AG04450 (cell line): ENCODE measurements at regions of chr2 and their contacts with region 1.

Region 1: GRCh38 chr2:212892193-212892592 is 259.2 kb downstream of the IKZF2 start:
- DNase-seq: peak; percentile 16
- H3K4me3 ChIP-seq: no peak overlapping the region
- H3K27ac ChIP-seq: no peak overlapping the region
- H3K27me3 ChIP-seq: no peaks in the 10 kb centered on the region
- CTCF ChIP-seq: peak; percentile 64

Region 2: DNA sequence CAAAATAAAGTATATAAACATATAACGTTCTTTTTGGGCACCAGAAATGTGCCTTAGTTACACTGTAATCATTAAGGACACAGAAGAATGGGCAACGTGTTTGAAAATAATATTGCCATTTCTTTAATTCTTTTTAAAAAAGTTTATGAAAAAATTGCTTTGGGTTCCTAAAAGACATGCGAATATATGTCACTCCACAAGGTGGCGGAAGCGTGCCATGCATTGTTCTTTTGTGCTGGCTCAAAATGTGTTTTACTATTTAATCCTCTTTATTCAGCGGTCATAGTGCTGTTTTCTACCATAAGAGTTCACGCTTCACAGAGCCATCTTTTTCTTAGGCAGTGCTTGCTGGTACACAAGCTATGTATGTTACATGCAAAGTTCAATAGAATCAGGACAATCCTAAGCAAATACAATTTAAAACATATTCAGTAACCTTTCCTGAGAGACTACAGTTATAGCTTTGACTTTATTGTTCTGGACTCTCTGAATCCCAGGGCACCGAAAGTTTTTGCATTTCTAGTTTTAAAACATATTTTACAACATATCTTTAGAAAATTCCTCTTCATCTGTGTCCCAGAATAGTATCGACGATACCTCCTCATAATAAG is 205.8 kb before region 1 on chr2:
- CTCF ChIA-PET with region 1: interaction called, 24 read pairs
- POLR2A ChIA-PET with region 1: no interaction called
- DNase-seq: peak; percentile 47
- H3K4me3 ChIP-seq: no peak overlapping the region
- H3K27ac ChIP-seq: no peak overlapping the region
- H3K27me3 ChIP-seq: no peaks in the 10 kb centered on the region
- CTCF ChIP-seq: peak; percentile 88

Region 3: GRCh38 chr2:212777020-212777491 is 115.1 kb before region 1 on chr2:
- CTCF ChIA-PET with region 1: interaction called, 81 read pairs
- POLR2A ChIA-PET with region 1: no interaction called
- DNase-seq: no peak
- H3K4me3 ChIP-seq: no peak overlapping the region
- H3K27ac ChIP-seq: no peak overlapping the region
- H3K27me3 ChIP-seq: no peaks in the 10 kb centered on the region
- CTCF ChIP-seq: peak; percentile 66

Region 4: DNA sequence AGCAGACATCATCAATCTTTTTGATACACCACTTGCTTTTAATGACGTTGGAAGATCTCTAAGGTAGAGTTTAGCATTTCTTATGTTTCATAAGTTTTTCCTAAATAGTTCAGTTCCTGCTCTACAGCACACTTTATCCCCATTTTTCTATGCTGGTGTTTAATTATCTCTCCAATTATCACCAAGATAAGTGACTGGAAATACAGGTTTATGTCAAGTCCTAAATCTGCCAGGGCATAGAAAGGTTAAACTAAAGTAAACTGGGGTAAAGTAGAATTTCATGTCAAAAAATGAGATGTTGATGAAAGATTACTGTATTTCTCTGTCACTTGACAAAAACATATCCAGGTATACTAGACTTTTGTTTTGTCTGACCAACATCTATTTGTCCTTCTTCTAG is 21.6 kb before region 1 on chr2:
- CTCF ChIA-PET with region 1: interaction called, 17 read pairs
- POLR2A ChIA-PET with region 1: no interaction called
- DNase-seq: no peak
- H3K4me3 ChIP-seq: no peak overlapping the region
- H3K27ac ChIP-seq: no peak overlapping the region
- H3K27me3 ChIP-seq: no peaks in the 10 kb centered on the region
- CTCF ChIP-seq: no peak

Region 5: GRCh38 chr2:213151437-213152064 is 259.4 kb after region 1 on chr2 and contains the start of gene IKZF2:
- CTCF ChIA-PET with region 1: interaction called, 14 read pairs
- POLR2A ChIA-PET with region 1: no interaction called
- DNase-seq: peak; percentile 80
- H3K4me3 ChIP-seq: peak within 1 kb of the TSS; percentile 80
- H3K27ac ChIP-seq: peak within 1 kb of the TSS; percentile 74
- H3K27me3 ChIP-seq: no peaks in the 10 kb centered on the region
- CTCF ChIP-seq: no peak
- polyA plus RNA-seq, gene IKZF2: 5.6 and 7.1 TPM in 2 replicates